Tibial artery (tissue), 4 donors: ENCODE measurements at regions of chr10 and their contacts with region 1.

Region 1: DNA sequence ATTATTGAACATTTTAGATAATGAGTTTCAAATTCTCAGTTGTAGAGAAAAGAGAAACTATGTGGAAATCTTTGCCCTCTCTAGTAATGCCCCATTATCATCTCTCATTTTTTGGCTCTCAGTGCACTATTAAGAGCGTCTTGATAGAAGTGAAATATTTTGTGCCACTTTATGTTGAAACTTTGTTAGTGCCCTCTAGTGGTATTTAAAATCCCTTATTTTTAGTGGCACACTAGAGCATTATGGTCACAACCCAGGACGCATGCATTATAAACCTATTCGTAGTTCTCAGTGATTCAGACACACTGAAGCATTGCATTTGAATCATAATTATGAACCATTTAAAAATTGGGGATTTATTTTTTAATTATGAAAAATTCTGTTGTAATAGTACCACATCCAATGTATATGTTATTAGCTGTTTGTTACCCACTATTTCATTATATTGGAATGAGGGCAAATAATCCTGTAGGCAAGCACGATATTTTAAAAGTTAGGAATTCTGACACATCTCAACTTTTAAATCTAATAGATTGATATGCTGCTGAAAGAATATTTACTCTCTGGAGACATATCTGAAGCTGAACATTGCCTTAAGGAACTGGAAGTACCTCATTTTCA is 21.9 kb downstream of the PDCD4 start:
- DNase-seq: no peak
- H3K4me3 ChIP-seq: no peak overlapping the region
- H3K27ac ChIP-seq: peak overlapping the region in 1 of 2 donors; percentile 18
- H3K4me1 ChIP-seq: peaks cover 0 to 4% (median 1%) of the 10 kb centered on the region in 4 donors
- H3K27me3 ChIP-seq: no peaks in the 10 kb centered on the region
- CTCF ChIP-seq: peak; percentile 58 to 73

Region 2: DNA sequence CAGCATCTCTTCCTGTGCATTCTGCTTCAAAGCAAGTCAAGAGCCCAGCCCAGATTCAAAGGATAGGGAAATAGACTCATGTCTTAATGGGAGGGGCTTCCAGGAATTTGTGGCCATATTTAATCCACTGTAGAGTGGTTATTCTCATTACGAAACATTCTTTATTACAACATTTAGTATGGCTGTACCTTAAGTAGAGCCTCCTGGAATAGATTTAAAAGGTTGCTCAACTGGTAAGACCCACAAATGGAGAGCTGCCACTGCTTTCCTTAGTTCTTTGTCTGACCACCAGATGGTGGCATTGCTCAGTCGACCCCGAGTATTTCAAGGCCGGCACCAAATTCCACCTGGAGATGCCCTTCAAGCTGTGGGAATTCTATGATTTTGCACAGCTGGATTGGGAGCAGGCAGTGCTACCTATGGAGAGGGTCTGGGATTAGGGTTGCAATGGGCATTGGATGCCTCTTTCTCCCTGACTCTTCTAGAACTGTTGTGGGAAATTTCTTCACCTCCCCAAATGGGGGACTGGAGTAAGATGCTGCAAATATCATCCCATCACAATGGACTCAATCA is 147.3 kb before region 1 on chr10:
- intact Hi-C with region 1: loop called (anchors 5 kb)
- DNase-seq: peak; percentile 58 to 74
- H3K4me3 ChIP-seq: no peak overlapping the region
- H3K27ac ChIP-seq: no peak overlapping the region
- H3K4me1 ChIP-seq: no peaks in the 10 kb centered on the region
- H3K27me3 ChIP-seq: no peaks in the 10 kb centered on the region
- CTCF ChIP-seq: peak; percentile 73 to 74

Region 3: DNA sequence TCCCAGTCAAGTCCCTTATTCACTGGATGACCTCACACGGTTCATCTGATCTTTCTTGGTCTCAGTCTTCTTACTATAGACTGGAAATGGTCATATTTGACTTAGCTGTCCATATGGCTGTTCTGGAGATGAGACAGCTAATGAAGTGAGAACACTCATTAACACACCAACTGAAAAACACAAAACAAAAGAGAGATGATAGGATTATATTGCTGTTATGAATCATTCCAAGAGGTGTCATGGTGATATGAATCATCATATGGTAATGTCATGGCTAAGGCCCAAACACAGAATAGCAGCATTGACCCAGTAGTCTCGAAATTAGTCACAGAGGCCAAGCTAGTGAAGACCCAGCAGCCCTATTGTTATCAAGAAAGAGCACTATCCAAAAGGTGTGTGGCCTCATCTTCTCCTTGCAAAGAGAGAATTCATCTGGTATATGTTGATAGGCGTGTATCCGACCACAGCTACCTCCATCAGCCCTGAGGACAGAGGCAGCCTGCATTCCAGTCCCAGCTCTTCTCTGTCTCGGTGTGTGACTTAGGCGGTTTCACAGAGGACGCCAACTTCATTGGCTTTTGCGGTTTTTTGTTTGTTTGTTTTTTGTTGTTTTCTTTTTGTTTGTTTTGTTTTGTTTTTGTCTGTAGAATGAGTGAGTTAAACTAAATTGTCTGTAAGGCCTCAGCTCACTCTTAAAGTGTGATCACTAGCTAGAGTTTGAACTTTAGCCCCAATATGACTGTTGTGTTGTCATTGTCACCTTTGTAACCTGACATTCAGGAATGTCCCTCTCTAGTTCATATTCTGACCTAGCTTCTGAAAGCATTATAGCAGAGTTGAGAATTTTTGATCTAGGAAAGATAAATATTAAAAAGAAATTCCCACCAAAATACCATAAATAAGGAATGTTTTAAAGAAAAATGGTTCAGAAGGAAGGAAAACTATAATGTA is 119.3 kb before region 1 on chr10:
- intact Hi-C with region 1: no loop called
- DNase-seq: no peak
- H3K4me3 ChIP-seq: no peak overlapping the region
- H3K27ac ChIP-seq: no peak overlapping the region
- H3K4me1 ChIP-seq: no peaks in the 10 kb centered on the region
- H3K27me3 ChIP-seq: no peaks in the 10 kb centered on the region
- CTCF ChIP-seq: no peak

Region 4: DNA sequence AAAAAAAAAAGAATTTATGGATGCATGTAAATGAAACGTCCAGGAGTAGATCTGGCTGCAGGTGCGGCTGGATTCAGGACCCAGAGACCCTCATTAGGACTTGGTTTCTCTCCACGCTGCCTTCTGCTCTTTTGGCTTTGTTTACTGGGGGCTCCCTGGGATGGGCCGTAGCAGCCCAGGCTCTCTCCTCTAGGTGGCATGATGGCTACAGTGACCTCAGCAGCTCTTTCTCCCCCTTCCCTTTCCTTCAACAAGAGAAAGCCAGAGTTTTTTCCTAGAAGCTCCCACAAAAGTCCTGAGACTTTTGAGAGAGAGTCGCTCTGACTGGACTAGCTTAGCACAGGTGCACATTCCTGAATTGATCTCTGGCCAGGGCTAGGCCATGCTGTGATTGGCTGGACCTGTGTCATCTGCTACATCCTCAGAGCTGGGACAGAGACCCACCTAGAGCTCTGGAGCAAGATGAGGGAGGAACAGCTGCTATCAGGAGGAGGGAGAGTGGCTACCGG is 89.8 kb before region 1 on chr10:
- intact Hi-C with region 1: loop called (anchors 5 kb)
- DNase-seq: peak; percentile 58 to 82
- H3K4me3 ChIP-seq: no peak overlapping the region
- H3K27ac ChIP-seq: no peak overlapping the region
- H3K4me1 ChIP-seq: peaks cover 0 to 24% (median 15%) of the 10 kb centered on the region in 4 donors
- H3K27me3 ChIP-seq: no peaks in the 10 kb centered on the region
- CTCF ChIP-seq: peak; percentile 65 to 67